ENCODE measurements at regions of chr5 and their contacts with region 1.

Region 1: DNA sequence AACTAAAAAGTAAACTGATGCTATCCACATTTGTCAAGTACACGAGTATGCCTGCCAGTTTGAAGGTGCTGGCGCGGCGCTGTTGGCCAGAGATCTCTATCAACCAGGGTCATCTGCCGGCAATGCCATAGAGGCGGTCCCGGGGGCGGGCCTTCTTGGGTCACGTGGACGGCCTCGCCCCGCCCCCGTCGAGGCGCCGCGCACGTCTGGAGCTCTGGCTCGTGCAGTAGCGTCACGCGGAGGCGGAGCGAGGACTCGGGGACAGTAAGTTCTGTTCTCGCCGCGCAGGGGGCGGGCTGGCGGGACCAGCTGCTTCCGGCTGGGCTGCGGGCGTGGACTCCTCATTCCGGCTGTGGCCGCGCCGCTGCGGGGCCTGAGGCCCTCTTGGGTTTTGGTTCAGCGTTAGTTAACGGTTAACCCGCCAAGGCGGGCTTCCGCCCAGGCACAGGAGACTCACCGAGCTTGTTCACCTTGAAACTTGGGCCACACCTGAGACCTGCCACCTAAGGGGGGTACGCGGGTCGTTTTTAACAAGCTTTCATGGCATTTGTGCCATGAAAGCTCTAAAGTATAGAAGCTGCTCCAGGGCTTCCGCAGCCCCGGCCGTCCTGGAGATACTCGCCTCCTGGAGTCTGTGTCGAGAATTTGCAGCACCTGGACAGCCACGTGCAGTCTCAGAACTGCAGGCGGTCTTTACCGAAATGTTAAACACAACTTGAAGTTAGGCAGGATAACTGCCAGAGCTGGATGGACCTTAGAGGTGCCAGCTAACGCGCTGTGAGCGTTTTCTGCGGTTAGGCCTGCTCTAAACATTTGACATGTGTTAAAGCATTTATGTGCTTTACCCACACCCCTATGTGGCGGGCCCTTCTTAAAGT is at the start of gene RFESD:
- DNase-seq: peak in 1 of 2 donors; percentile 98
- H3K4me3 ChIP-seq: peak within 1 kb of the TSS; percentile 43 to 65
- H3K27ac ChIP-seq: peak within 1 kb of the TSS; percentile 97
- H3K4me1 ChIP-seq: peaks cover 9% of the 10 kb centered on the region
- H3K27me3 ChIP-seq: no peaks in the 10 kb centered on the region
- CTCF ChIP-seq: peak in 1 of 3 experiments; percentile 11
- POLR2A ChIP-seq: peak in 1 of 2 donors; percentile 92
- total RNA-seq, gene RFESD: 1.2 TPM

Region 2: DNA sequence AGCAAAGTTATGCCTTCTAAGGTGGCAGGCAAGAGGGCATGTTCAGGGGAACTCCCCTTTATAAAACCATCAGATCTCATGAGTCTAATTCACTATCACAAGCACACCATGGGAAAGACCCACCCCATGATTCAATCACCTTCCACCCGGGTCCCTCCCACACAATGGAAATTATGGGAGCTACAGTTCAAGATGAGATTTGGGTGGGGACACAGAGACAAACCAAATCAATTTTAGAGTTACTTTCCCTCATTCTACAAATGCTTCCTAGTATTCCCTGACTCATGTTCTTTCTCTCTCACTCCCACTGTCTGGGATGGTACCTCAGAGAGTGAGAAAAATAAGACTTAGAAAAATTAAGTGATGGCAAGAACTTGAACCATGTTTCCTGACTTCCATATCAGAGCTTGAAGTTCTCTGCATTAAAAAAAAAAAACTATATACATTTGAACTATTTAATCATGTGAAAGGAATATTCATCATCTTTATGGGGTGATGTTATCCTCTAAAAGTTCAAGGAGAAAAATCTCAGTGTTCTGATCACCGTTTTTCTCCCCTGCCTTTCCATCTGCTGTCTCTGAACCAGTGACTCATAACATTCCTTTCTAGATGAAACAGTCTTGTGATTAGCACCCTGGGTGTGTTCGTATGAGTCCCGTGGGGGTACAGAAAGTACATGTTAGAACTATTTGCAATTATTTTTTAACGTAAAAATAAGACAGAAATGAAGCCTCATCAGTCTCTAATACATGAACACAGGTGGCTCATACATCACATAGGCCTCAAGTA is 745.4 kb before region 1 on chr5:
- intact Hi-C with region 1: no loop called
- DNase-seq: no peak
- H3K4me3 ChIP-seq: no peak overlapping the region
- H3K27ac ChIP-seq: no peak overlapping the region
- H3K4me1 ChIP-seq: no peaks in the 10 kb centered on the region
- H3K27me3 ChIP-seq: no peaks in the 10 kb centered on the region
- CTCF ChIP-seq: no peak
- POLR2A ChIP-seq: no peak

Region 3: GRCh38 chr5:95730730-95731570 is 84.2 kb after region 1 on chr5 and contains the start of gene RHOBTB3:
- intact Hi-C with region 1: loop called (anchors 2 kb)
- DNase-seq: peak in 1 of 2 donors; percentile 94
- H3K4me3 ChIP-seq: peak within 1 kb of the TSS; percentile 80 to 99
- H3K27ac ChIP-seq: peak within 1 kb of the TSS; percentile 89
- H3K4me1 ChIP-seq: peaks cover 27% of the 10 kb centered on the region
- H3K27me3 ChIP-seq: no peaks in the 10 kb centered on the region
- CTCF ChIP-seq: no peak
- POLR2A ChIP-seq: peak in 1 of 2 donors; percentile 68
- total RNA-seq, gene RHOBTB3: 43.2 TPM